ENCODE measurements at regions of chr3 and their contacts with region 1.

Region 1: GRCh38 chr3:33717866-33718594 is at the start of gene CLASP2:
- DNase-seq: peak; percentile 95
- ATAC-seq: peak; percentile 85
- H3K4me3 ChIP-seq: peak within 1 kb of the TSS; percentile 85 to 96 (median 92)
- H3K4me3 Mint-ChIP-seq: peak within 1 kb of the TSS; percentile 99
- H3K27ac ChIP-seq: peak within 1 kb of the TSS; percentile 90 to 94
- H3K27ac Mint-ChIP-seq: peak within 1 kb of the TSS; percentile 99
- H3K4me1 ChIP-seq: peaks cover 19 to 21% of the 10 kb centered on the region in 2 donors
- H3K4me1 Mint-ChIP-seq: peaks cover 20% of the 10 kb centered on the region
- H3K27me3 ChIP-seq: no peaks in the 10 kb centered on the region
- H3K27me3 Mint-ChIP-seq: no peaks in the 10 kb centered on the region
- CTCF ChIP-seq: no peak
- total RNA-seq, gene CLASP2: 109 and 113 TPM in 2 replicates

Region 2: GRCh38 chr3:32493437-32494414 is 1224.3 kb before region 1 on chr3:
- CTCF ChIA-PET with region 1: no interaction called
- POLR2A ChIA-PET with region 1: no interaction called
- intact Hi-C with region 1: loop called (anchors 10 kb)
- DNase-seq: peak; percentile 43
- ATAC-seq: peak; percentile 23
- H3K4me3 ChIP-seq: no peak overlapping the region
- H3K4me3 Mint-ChIP-seq: no peak overlapping the region
- H3K27ac ChIP-seq: peak overlapping the region in 1 of 2 donors; percentile 71
- H3K27ac Mint-ChIP-seq: no peak overlapping the region
- H3K4me1 ChIP-seq: peaks cover 35 to 42% of the 10 kb centered on the region in 2 donors
- H3K4me1 Mint-ChIP-seq: peaks cover 24% of the 10 kb centered on the region
- H3K27me3 ChIP-seq: no peaks in the 10 kb centered on the region
- H3K27me3 Mint-ChIP-seq: no peaks in the 10 kb centered on the region
- CTCF ChIP-seq: no peak

Region 3: GRCh38 chr3:32684800-32685542 is 1033.1 kb before region 1 on chr3 and contains the start of gene CNOT10:
- CTCF ChIA-PET with region 1: no interaction called
- POLR2A ChIA-PET with region 1: no interaction called
- intact Hi-C with region 1: loop called (anchors 5 kb)
- DNase-seq: peak; percentile 97
- ATAC-seq: peak; percentile 93
- H3K4me3 ChIP-seq: peak within 1 kb of the TSS; percentile 76 to 97 (median 88)
- H3K4me3 Mint-ChIP-seq: peak within 1 kb of the TSS; percentile 95
- H3K27ac ChIP-seq: peak within 1 kb of the TSS; percentile 77 to 95
- H3K27ac Mint-ChIP-seq: peak within 1 kb of the TSS; percentile 95
- H3K4me1 ChIP-seq: peaks cover 19 to 20% of the 10 kb centered on the region in 2 donors
- H3K4me1 Mint-ChIP-seq: peaks cover 36% of the 10 kb centered on the region
- H3K27me3 ChIP-seq: no peaks in the 10 kb centered on the region
- H3K27me3 Mint-ChIP-seq: no peaks in the 10 kb centered on the region
- CTCF ChIP-seq: no peak
- total RNA-seq, gene CNOT10: 66.2 and 69.0 TPM in 2 replicates

Region 4: GRCh38 chr3:33131331-33132018 is 586.6 kb before region 1 on chr3:
- CTCF ChIA-PET with region 1: interaction called, 10 read pairs
- POLR2A ChIA-PET with region 1: no interaction called
- intact Hi-C with region 1: loop called (anchors 5 kb)
- DNase-seq: peak; percentile 70
- ATAC-seq: peak; percentile 66
- H3K4me3 ChIP-seq: no peak overlapping the region
- H3K4me3 Mint-ChIP-seq: no peak overlapping the region
- H3K27ac ChIP-seq: no peak overlapping the region
- H3K27ac Mint-ChIP-seq: no peak overlapping the region
- H3K4me1 ChIP-seq: no peaks in the 10 kb centered on the region
- H3K4me1 Mint-ChIP-seq: no peaks in the 10 kb centered on the region
- H3K27me3 ChIP-seq: no peaks in the 10 kb centered on the region
- H3K27me3 Mint-ChIP-seq: no peaks in the 10 kb centered on the region
- CTCF ChIP-seq: peak; percentile 89

Region 5: GRCh38 chr3:33636125-33636850 is 81.7 kb before region 1 on chr3:
- CTCF ChIA-PET with region 1: interaction called, 6 read pairs
- POLR2A ChIA-PET with region 1: no interaction called
- intact Hi-C with region 1: loop called (anchors 1 kb)
- DNase-seq: peak; percentile 58
- ATAC-seq: no peak
- H3K4me3 ChIP-seq: no peak overlapping the region
- H3K4me3 Mint-ChIP-seq: no peak overlapping the region
- H3K27ac ChIP-seq: no peak overlapping the region
- H3K27ac Mint-ChIP-seq: no peak overlapping the region
- H3K4me1 ChIP-seq: no peaks in the 10 kb centered on the region
- H3K4me1 Mint-ChIP-seq: no peaks in the 10 kb centered on the region
- H3K27me3 ChIP-seq: no peaks in the 10 kb centered on the region
- H3K27me3 Mint-ChIP-seq: no peaks in the 10 kb centered on the region
- CTCF ChIP-seq: peak; percentile 76

Region 6: DNA sequence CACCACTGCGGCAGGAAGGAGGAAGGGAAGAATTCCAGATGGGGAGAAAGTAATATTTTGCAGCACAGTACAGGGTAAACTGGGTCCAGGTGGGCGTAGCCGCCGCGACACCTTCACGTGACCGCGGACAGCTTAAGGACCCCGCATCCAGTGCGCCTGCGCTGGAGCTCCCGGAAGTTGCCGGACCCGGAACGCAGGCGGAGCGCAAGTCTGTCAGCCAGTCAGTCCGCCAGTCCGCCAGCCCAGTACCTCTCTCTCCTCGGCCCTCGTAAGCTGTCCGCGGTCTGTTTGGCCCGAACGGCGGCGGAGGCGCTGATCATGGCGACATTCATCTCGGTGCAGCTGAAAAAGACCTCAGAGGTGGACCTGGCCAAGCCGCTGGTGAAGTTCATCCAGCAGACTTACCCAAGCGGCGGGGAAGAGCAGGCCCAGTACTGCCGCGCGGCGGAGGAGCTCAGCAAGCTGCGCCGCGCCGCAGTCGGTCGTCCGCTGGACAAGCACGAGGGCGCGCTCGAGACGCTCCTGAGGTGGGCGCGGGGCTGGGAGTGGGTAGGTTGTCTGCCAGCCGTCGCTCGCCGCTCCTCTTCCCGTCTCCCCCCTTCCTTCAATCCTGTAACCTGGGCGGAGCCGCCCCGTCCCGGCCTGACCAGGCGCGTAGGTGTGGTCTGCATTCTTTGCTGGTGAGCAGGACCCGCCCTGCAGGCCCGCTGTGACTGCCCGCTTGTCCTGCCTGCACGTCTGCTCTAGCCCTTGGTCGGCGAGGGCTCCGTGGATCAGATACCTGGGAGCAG is 80.6 kb after region 1 on chr3 and contains the start of gene PDCD6IP:
- CTCF ChIA-PET with region 1: interaction called, 3 read pairs
- POLR2A ChIA-PET with region 1: no interaction called
- intact Hi-C with region 1: loop called (anchors 1 kb)
- DNase-seq: peak; percentile 95
- ATAC-seq: peak; percentile 86
- H3K4me3 ChIP-seq: peak within 1 kb of the TSS; percentile 89 to 94 (median 93)
- H3K4me3 Mint-ChIP-seq: peak within 1 kb of the TSS; percentile 99
- H3K27ac ChIP-seq: peak within 1 kb of the TSS; percentile 84 to 86
- H3K27ac Mint-ChIP-seq: peak within 1 kb of the TSS; percentile 96
- H3K4me1 ChIP-seq: peaks cover 28 to 32% of the 10 kb centered on the region in 2 donors
- H3K4me1 Mint-ChIP-seq: peaks cover 46% of the 10 kb centered on the region
- H3K27me3 ChIP-seq: no peaks in the 10 kb centered on the region
- H3K27me3 Mint-ChIP-seq: no peaks in the 10 kb centered on the region
- CTCF ChIP-seq: peak; percentile 25
- total RNA-seq, gene PDCD6IP: 276 TPM in 2 replicates